A673 (cell line): ENCODE measurements at regions of chr15 and their contacts with region 1.

Region 1: GRCh38 chr15:88745696-88746095 is 57.5 kb upstream of the ACAN start:
- DNase-seq: no peak
- H3K4me3 ChIP-seq: no peak overlapping the region
- H3K27ac ChIP-seq: no peak overlapping the region
- H3K4me1 ChIP-seq: no peaks in the 10 kb centered on the region
- H3K27me3 ChIP-seq: peaks cover 74% of the 10 kb centered on the region
- CTCF ChIP-seq: no peak

Region 2: DNA sequence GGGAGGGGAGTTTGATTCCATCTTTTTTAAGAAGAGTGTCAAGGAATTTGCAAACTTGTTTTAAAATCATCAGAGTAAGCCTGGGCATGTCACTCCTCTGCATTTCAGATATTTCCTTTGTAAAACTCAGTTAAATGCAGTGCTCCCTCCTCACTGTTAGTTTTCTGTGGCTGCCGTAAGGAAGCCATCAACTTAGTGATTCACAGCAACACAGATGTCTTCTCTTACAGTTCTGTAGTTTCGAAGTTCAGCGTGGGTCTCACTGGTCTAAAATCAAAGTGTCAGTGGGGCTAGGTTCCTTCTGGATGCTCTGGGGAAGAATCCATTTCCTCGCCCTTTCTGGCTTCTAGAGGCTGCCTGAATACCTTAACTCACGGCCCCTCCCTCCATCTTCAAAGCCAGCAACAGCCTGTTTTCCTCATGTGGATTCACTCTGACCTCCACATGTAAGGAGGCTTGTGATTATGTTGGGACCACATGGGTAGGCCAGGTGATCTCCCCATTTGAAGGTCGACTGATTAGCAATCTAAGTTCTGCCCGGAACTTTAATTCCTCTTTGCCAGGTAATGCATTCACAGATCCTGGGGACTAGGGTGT is 94.5 kb before region 1 on chr15:
- CTCF ChIA-PET with region 1: no interaction called
- POLR2A ChIA-PET with region 1: interaction called, 12 read pairs
- intact Hi-C with region 1: no loop called
- DNase-seq: no peak
- H3K4me3 ChIP-seq: no peak overlapping the region
- H3K27ac ChIP-seq: no peak overlapping the region
- H3K4me1 ChIP-seq: no peaks in the 10 kb centered on the region
- H3K27me3 ChIP-seq: no peaks in the 10 kb centered on the region
- CTCF ChIP-seq: no peak

Region 3: GRCh38 chr15:89075846-89076245 is 330.1 kb after region 1 on chr15:
- CTCF ChIA-PET with region 1: no interaction called
- POLR2A ChIA-PET with region 1: no interaction called
- intact Hi-C with region 1: no loop called
- DNase-seq: no peak
- H3K4me3 ChIP-seq: no peak overlapping the region
- H3K27ac ChIP-seq: no peak overlapping the region
- H3K4me1 ChIP-seq: no peaks in the 10 kb centered on the region
- H3K27me3 ChIP-seq: no peaks in the 10 kb centered on the region
- CTCF ChIP-seq: no peak